WTC11 (cell line): ENCODE measurements at regions of chr18 and their contacts with region 1.

Region 1: GRCh38 chr18:35290073-35290735 is at the start of gene ZSCAN30:
- DNase-seq: peak; percentile 96
- ATAC-seq: peak; percentile 99
- H3K4me3 Mint-ChIP-seq: peak within 1 kb of the TSS; percentile 99
- H3K27ac Mint-ChIP-seq: peak within 1 kb of the TSS; percentile 95
- H3K4me1 Mint-ChIP-seq: peaks cover 12% of the 10 kb centered on the region
- H3K27me3 Mint-ChIP-seq: no peaks in the 10 kb centered on the region
- CTCF ChIP-seq: no peak
- total RNA-seq, gene ZSCAN30: 21.9 to 24.3 TPM (median 22.6 TPM) in 3 replicates

Region 2: DNA sequence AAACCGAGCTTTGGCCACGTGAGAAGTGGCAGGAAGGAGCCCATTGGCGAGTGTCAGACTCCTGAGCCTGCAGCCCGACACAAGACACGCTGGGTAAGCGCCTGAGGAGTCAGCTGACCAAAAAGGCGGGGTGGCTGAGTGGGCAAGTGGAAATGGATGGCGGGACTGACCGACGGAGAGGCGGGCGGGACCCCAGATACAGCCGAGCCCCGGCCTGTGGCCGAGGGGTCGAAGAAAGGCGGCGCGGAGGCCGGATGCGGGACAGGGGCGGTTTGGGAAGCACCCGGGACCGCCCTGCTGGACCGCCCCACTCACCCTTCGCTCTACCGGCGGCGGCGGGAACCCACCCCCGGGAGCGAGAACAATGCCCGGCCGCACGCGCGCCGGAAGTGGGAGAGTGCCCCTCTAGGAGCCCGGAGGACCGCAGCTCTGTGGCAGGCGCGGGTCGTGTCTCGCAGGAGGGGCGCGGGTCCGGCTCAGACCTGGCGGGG is 23.0 kb before region 1 on chr18:
- CTCF ChIA-PET with region 1: interaction called, 7 read pairs
- POLR2A ChIA-PET with region 1: interaction called, 14 read pairs
- DNase-seq: peak; percentile 83
- ATAC-seq: peak; percentile 90
- H3K4me3 Mint-ChIP-seq: peak overlapping the region; percentile 80
- H3K27ac Mint-ChIP-seq: peak overlapping the region; percentile 76; the same call in 1 of the 2 replicates
- H3K4me1 Mint-ChIP-seq: peaks cover 3% of the 10 kb centered on the region
- H3K27me3 Mint-ChIP-seq: peaks cover 29% of the 10 kb centered on the region
- CTCF ChIP-seq: no peak

Region 3: DNA sequence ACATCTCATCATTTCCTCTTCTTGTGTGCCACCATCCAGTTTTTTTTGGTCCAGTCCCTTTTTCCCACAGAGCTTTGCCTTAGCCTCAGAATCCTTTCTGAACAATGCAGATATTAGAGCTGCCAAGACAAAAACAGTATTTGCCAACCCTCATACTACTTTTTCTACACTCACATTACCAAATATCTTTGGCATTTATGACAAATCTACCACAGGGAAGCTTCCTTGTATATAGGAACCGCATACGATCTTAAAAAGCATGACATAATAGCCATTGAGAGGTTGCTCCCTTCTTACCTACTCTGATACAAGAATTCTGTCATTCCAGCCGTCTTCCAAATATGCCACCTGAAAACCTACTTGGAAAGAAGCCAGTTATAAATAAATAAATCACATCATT is 44.6 kb after region 1 on chr18:
- CTCF ChIA-PET with region 1: no interaction called
- POLR2A ChIA-PET with region 1: no interaction called
- DNase-seq: no peak
- ATAC-seq: no peak
- H3K4me3 Mint-ChIP-seq: no peak overlapping the region
- H3K27ac Mint-ChIP-seq: no peak overlapping the region
- H3K4me1 Mint-ChIP-seq: no peaks in the 10 kb centered on the region
- H3K27me3 Mint-ChIP-seq: no peaks in the 10 kb centered on the region
- CTCF ChIP-seq: no peak